Activated T-helper 2 cell treated with anti-CD3 and anti-CD28 coated beads, Interferon-gamma antibody, Interleukin-2, Interleukin-4, amounts not matched to agents 10 μg/mL and 5 μg/mL and 100 μg/mL, durations not matched to agents 14 hours and 24 hours and 36 hours (primary cell): ENCODE measurements at regions of chr1 and their contacts with region 1.

Region 1: DNA sequence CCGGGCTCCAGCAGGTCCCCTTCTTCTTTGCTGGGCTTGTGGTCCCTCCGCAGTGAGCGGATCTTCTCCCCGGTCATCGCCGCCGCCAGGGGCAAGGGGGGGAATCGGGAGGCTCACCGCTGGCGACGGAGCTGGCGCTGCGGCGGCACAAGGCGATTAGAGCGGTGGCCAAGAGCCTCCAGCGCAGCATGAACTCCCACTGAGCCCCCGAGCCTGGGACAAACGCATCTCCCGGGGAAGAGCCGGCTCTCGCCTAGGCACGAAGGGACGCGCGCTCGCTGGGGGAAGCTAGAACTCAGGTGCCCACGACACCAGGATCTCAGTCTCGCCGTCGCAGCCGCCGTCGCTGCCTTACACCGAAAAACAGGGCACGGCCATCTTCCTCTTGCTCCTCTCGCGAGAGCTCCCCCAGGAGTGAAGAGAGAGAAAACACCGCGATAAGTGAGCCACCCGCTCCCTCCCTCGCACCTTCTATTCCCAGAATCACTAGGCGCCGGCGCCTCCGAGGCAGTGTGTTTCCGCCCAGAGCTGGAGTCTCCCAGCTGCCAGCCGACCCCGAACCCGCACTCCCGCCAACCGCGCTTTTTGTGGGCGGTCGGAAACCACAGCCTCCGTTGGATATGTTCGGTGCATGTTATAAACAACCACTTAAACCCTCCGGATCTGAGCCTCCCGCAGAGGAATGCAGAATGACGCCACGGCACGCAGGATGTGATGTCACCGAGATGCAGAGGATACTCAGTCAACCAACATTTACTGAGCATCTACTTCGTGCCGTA is at the start of gene ANKRD13C:
- DNase-seq: peak; percentile 90
- H3K4me3 Mint-ChIP-seq: peak within 1 kb of the TSS; percentile 91
- H3K27ac Mint-ChIP-seq: peak within 1 kb of the TSS; percentile 94
- H3K4me1 Mint-ChIP-seq: peaks cover 28% of the 10 kb centered on the region
- H3K27me3 Mint-ChIP-seq: no peaks in the 10 kb centered on the region
- total RNA-seq, gene ANKRD13C: 24.7 and 25.8 TPM in 2 replicates

Region 2: GRCh38 chr1:70134148-70134547 is 220.4 kb before region 1 on chr1:
- intact Hi-C with region 1: loop called (anchors 10 kb)
- DNase-seq: no peak
- H3K4me3 Mint-ChIP-seq: no peak overlapping the region
- H3K27ac Mint-ChIP-seq: no peak overlapping the region
- H3K4me1 Mint-ChIP-seq: no peaks in the 10 kb centered on the region
- H3K27me3 Mint-ChIP-seq: peaks cover 21% of the 10 kb centered on the region

Region 3: DNA sequence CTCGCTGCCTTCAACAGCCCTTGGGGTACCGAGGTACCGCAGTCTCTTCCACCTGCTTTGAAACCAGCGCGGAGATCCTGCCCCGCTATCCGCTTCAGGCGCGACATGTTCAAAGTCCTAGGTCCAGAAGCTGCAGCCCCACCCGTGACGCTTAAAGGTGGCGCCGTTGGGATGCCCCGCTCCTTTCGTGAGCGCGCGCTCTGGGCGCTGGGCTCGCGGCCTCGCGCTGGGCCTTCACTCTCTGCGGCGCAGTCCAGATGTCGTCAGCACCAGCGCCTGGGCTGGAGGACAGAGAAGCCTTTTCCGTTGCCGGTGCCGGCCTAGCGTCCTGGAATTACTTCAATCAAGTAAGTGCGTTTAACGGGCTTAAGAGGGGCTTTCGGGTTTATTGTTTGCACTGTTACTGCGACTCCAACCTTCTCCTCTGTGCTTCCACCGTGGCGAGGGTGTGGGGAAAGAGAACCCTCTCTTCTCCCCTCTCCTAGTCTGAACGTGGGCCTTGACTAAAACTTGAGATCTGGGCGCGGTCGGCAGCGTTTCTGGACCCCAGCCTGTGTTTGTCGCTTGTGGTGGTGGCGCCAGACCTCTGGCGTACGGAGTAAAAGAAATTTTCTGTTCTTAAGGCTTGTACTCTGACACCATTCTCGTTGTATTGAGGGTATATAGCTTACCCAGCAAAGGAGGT is 148.9 kb before region 1 on chr1 and contains the start of gene LRRC40:
- intact Hi-C with region 1: loop called (anchors 1 kb)
- DNase-seq: peak; percentile 94
- H3K4me3 Mint-ChIP-seq: peak within 1 kb of the TSS; percentile 99
- H3K27ac Mint-ChIP-seq: peak within 1 kb of the TSS; percentile 99
- H3K4me1 Mint-ChIP-seq: peaks cover 49% of the 10 kb centered on the region
- H3K27me3 Mint-ChIP-seq: no peaks in the 10 kb centered on the region
- total RNA-seq, gene LRRC40: 23.3 and 23.4 TPM in 2 replicates

Region 4: GRCh38 chr1:70221241-70222121 is 133.0 kb before region 1 on chr1 and contains the start of gene SRSF11:
- intact Hi-C with region 1: loop called (anchors 1 kb)
- DNase-seq: peak; percentile 95
- H3K4me3 Mint-ChIP-seq: peak within 1 kb of the TSS; percentile 93
- H3K27ac Mint-ChIP-seq: peak within 1 kb of the TSS; percentile 97
- H3K4me1 Mint-ChIP-seq: peaks cover 35% of the 10 kb centered on the region
- H3K27me3 Mint-ChIP-seq: no peaks in the 10 kb centered on the region
- total RNA-seq, gene SRSF11: 194 and 195 TPM in 2 replicates

Region 5: GRCh38 chr1:70504176-70504820 is 149.8 kb after region 1 on chr1:
- intact Hi-C with region 1: loop called (anchors 5 kb)
- DNase-seq: no peak
- H3K4me3 Mint-ChIP-seq: no peak overlapping the region
- H3K27ac Mint-ChIP-seq: peak overlapping the region; percentile 30
- H3K4me1 Mint-ChIP-seq: peaks cover 14% of the 10 kb centered on the region
- H3K27me3 Mint-ChIP-seq: no peaks in the 10 kb centered on the region

Region 6: DNA sequence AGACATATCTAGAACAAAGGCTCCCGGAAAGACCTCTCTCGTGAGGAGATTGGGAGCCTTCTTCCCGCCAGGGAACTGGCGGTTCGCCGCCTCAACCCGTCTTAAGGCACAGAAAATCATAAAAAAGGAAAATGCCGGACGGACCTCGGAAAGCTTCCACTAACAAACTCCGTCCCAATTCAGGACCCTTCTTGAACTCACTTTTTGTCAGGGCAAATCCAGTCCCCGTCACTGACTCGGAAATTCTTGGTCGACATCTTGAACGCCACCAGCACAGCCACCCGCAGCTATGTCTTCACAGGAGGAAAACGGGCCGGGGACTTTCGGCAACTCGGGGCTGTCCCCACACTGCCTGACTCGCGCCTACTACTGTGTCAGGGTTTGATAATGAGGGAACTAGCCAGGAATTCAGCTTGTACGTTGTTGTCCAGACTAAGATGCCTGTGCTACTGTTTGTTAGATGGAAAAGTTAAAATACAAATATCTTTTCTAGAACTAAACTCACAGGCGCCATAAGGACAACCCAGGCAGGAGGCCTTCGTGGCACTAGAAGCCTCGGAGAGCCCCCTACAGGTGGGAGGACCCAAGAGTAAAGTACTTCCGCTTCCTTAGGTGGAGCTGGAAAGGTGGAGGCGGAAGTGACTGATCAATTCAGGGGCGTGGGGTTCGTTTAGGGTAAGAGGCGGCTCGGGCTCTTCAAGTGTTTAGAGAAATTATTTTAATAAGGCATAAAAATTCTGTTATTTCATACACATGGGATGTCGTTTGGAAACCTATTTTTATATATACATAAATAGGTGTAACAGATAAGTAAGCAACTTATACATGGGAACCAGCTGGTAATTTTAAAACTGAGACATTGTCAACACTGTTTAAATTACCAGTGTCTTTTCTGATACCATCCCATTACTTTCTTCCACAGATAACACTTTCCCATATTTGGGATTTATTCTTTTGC is 726.5 kb after region 1 on chr1 and contains the start of gene ZRANB2:
- intact Hi-C with region 1: loop called (anchors 2 kb)
- DNase-seq: peak; percentile 85
- H3K4me3 Mint-ChIP-seq: peak within 1 kb of the TSS; percentile 98
- H3K27ac Mint-ChIP-seq: peak within 1 kb of the TSS; percentile 100
- H3K4me1 Mint-ChIP-seq: peaks cover 16% of the 10 kb centered on the region
- H3K27me3 Mint-ChIP-seq: peaks cover 14% of the 10 kb centered on the region
- total RNA-seq, gene ZRANB2: 131 and 135 TPM in 2 replicates